Ascending aorta (tissue), 2 donors: ENCODE measurements at regions of chr20 and their contacts with region 1.

Region 1: GRCh38 chr20:18507218-18508021 is at the start of gene SEC23B:
- DNase-seq: peak; percentile 94 to 99
- H3K4me3 ChIP-seq: peak within 1 kb of the TSS; percentile 64 to 78
- H3K27ac ChIP-seq: peak within 1 kb of the TSS; percentile 88 to 94
- H3K4me1 ChIP-seq: peaks cover 4 to 11% of the 10 kb centered on the region in 2 donors
- H3K27me3 ChIP-seq: no peaks in the 10 kb centered on the region
- CTCF ChIP-seq: no peak
- total RNA-seq, gene SEC23B: 21.8 TPM

Region 2: DNA sequence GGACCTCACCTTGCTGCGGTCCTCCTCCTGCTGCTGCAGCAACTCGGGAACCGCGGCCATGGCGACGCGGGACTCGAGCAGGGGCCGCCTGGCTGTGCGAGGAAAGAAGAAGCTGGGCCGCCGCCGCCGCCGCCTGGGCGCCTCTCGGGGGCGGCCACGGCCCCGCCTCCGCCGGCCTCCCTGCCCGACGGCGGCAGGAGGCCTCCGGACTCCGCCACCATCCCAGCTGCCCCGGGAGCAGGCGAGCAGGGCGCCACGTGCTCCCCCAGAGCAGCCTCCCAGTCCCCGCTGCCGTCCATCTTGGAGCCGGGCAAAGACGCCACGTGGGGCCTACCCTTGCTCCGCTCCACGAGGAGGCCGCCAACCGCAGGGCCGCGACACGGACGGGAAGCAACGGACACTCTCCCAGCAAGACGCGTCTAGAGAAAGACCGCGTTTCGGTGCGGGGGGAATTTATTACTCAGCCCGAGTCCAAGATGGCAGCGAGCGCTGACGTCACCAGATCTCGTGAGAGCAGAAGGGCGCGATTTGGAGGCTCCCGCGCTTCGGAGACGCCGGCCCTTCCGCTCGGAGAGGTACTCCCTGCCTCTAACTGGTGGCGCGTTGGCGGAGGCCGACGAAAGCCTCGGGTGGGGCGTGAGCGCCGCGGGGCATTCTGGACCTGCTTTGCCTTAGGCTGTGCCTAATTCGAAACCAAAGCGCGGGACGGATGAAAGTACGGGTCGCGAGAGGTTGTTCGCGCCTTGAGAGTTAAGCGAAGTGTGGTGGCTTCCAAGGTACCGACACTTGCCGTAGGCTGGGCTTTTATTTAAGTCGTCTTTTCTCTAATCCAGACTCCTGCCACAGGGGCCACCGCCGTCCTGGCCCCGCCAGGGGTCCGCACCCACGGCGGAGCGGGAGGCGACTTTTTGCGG is 538.8 kb before region 1 on chr20 and contains the starts of genes MGME1 and SNX5:
- intact Hi-C with region 1: loop called (anchors 1 kb)
- DNase-seq: peak; percentile 99 to 100
- H3K4me3 ChIP-seq: peak within 1 kb of the TSS; percentile 79 to 84
- H3K27ac ChIP-seq: peak within 1 kb of the TSS; percentile 94 to 96
- H3K4me1 ChIP-seq: peaks cover 4 to 31% of the 10 kb centered on the region in 2 donors
- H3K27me3 ChIP-seq: no peaks in the 10 kb centered on the region
- CTCF ChIP-seq: no peak
- total RNA-seq, gene MGME1: 0.85 TPM
- total RNA-seq, gene SNX5: 32.7 TPM

Region 3: DNA sequence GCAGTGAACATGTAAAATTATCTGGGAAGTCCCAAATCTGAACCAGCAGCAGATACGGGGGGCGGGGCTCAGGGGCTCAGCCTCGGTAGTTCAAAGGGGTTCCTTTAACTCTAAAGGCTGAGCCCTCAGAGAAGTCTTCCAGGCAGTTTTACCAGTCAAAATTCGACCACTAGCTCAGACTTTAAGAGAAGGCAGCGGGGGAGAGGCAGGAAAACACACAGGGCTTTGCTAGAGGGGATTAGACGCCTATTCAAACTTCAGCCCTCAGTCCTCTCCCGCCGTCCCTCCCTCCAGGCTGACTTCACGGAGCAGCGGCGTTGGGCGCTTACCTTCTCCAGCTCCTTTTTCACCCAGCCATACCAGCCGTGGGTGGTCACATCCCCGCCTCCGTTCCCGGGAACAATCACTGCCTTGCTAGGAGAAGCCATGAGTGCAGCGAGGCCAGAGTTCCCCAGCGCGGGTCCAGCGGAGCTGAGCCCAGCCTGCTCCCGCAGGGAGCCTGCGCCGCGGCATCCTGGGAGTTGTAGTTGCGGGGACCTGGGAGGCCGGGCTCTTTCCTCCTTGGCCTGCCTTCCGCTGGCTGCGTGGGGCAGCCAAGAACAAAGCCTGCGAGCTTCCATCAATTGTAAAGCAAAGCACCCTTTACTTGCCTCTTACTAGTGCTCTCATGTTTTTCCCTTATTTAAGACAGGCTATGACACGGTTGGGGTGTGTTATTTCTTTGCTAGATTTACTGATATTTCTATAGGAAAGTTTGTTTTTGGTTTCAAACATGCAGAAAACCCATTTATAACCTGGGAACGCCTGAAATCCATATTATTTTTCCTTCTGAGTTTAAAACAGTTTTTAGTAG is 10.5 kb before region 1 on chr20 and contains the start of gene RBBP9:
- intact Hi-C with region 1: loop called (anchors 1 kb)
- DNase-seq: peak; percentile 28 to 92
- H3K4me3 ChIP-seq: peak within 1 kb of the TSS; percentile 75 to 83
- H3K27ac ChIP-seq: peak within 1 kb of the TSS; percentile 69 to 73
- H3K4me1 ChIP-seq: peaks cover 0 to 6% of the 10 kb centered on the region in 2 donors
- H3K27me3 ChIP-seq: no peaks in the 10 kb centered on the region
- CTCF ChIP-seq: no peak
- total RNA-seq, gene RBBP9: 6.8 TPM

Region 4: DNA sequence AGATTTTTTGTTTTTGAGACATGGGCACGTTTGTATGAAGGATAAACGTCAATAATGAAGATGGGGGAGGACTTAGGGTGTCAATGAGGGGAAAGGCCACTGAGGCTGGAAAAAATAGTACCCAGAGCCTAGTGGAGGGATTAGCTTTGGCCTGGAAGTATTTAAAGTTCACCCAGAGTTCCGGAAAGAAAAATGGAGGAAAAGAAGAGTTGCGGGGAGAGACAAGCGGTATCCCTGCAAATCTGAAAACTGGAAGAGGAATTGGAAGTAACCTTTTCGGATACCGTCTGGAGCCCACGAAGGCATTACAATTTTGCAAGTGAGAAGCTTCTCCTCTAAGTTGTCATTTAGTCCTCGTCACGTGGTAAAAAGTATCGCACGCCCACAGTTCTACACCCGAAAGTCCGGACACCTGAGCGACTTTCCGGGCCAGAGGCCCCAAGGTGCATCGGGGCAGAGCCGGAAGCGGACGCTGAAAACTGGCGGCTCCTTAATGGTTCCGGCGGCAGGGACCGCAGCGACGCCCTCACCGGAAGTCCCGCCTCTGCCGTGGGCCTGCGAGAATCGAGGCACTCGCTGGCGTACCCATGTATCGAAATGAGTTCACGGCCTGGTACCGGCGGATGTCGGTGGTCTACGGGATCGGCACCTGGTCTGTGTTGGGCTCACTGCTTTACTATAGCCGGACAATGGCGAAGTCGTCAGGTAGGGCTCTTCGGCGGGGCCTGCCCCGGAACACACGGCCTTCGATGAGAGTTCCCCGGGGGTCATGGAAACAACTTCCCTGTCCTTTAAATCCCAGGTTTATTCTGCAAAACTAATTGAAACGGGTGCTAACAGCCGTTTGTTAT is 59.7 kb after region 1 on chr20 and contains the start of gene SMIM26:
- intact Hi-C with region 1: loop called (anchors 1 kb)
- DNase-seq: peak; percentile 43 to 96
- H3K4me3 ChIP-seq: peak within 1 kb of the TSS; percentile 73 to 86
- H3K27ac ChIP-seq: peak within 1 kb of the TSS; percentile 80 to 93
- H3K4me1 ChIP-seq: peaks cover 0 to 10% of the 10 kb centered on the region in 2 donors
- H3K27me3 ChIP-seq: no peaks in the 10 kb centered on the region
- CTCF ChIP-seq: no peak
- total RNA-seq, gene SMIM26: 67.7 TPM

Region 5: DNA sequence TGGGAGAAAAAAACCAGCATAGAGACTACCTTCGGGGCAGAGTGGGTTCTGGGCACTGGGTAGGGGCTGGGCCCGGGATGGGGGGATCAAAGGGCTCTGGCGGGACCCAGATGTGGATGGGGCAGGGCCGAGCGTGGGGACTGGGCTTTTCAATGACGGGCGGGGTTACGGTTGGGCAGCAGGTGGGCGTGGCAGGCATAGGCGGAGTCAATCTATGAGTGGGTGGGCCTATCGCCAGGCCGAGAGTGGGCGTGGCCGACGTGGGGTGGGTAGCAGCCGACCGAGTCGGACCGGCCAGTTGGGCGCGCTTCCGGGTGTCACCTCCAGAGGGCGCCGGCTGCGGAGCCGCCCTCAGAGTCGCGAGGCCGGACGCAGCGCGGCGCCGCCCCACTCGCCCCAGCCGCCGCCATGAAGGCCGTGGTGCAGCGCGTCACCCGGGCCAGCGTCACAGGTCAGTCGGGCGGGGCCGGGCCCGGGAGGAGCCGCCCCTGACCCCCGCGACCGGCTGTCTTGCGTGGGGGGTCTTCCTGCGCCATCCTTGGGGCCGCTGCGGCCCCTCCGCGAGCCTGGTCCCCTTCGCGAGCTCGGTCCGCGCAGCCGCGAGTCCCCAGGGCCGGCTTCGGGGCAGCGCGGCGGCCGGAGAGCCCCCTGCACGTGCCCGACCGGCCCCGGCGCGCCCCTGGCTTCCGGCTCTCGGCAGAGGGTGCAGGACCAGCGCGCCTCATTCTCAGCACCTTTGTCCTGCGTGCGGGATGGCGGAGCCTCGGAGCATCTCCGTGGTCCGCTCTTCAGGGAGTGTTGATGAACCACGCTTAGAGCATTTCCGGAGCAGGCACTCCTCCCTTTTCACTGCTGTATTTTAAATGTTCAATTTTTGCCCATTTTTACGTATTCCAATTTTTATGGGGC is 80.5 kb after region 1 on chr20 and contains the start of gene DTD1:
- intact Hi-C with region 1: loop called (anchors 1 kb)
- DNase-seq: peak; percentile 67 to 97
- H3K4me3 ChIP-seq: peak within 1 kb of the TSS; percentile 83 to 98
- H3K27ac ChIP-seq: peak within 1 kb of the TSS; percentile 75 to 83
- H3K4me1 ChIP-seq: peaks cover 0 to 15% of the 10 kb centered on the region in 2 donors
- H3K27me3 ChIP-seq: no peaks in the 10 kb centered on the region
- CTCF ChIP-seq: peak; percentile 65 to 67 (median 66)
- total RNA-seq, gene DTD1: 34.9 TPM

Region 6: GRCh38 chr20:18625907-18626655 is 118.7 kb after region 1 on chr20:
- intact Hi-C with region 1: no loop called
- DNase-seq: no peak
- H3K4me3 ChIP-seq: no peak overlapping the region
- H3K27ac ChIP-seq: no peak overlapping the region
- H3K4me1 ChIP-seq: peaks cover 0 to 3% of the 10 kb centered on the region in 2 donors
- H3K27me3 ChIP-seq: no peaks in the 10 kb centered on the region
- CTCF ChIP-seq: no peak

Region 7: DNA sequence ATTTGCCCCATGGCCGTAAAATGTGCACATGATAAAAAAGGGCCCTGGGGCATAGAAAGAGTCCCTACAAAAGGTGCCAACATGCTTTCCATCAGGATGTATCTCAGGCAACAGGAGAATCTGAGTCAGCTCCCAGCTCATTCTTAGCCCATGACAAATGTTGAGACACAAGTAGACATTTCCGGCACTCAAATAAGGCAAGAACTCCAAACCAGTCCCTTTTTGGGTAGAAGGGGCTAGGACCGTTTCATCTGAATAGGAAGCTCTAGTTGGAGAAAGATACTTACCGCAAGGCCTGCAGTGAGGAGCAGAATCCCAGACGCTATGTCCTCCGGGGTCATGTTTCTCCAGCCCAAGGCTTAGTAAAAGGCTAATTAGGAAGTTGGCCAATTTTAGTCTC is 989.6 kb after region 1 on chr20:
- intact Hi-C with region 1: loop called (anchors 10 kb)
- DNase-seq: peak in 1 of 2 donors; percentile 72
- H3K4me3 ChIP-seq: no peak overlapping the region
- H3K27ac ChIP-seq: peak overlapping the region; percentile 82 to 84
- H3K4me1 ChIP-seq: peaks cover 24 to 56% of the 10 kb centered on the region in 2 donors
- H3K27me3 ChIP-seq: no peaks in the 10 kb centered on the region
- CTCF ChIP-seq: no peak